CD4-positive, alpha-beta T cell (primary cell): ENCODE measurements at regions of chr16 and their contacts with region 1.

Region 1: GRCh38 chr16:2047330-2048115 is at the starts of genes NTHL1 and TSC2:
- DNase-seq: peak; percentile 78 to 96 (median 90)
- ATAC-seq: peak; percentile 90
- H3K4me3 ChIP-seq: peak within 1 kb of the TSS; percentile 96
- H3K4me3 Mint-ChIP-seq: peak within 1 kb of the TSS; percentile 93
- H3K27ac ChIP-seq: peak within 1 kb of the TSS in 1 of 2 donors; percentile 29
- H3K27ac Mint-ChIP-seq: peak within 1 kb of the TSS; percentile 56
- H3K4me1 ChIP-seq: peaks cover 33% of the 10 kb centered on the region
- H3K4me1 Mint-ChIP-seq: peaks cover 23% of the 10 kb centered on the region
- H3K27me3 ChIP-seq: no peaks in the 10 kb centered on the region
- H3K27me3 Mint-ChIP-seq: no peaks in the 10 kb centered on the region
- CTCF ChIP-seq: peak; percentile 57
- total RNA-seq, gene NTHL1: 2.7 to 2.9 TPM
- total RNA-seq, gene TSC2: 83.0 to 85.0 TPM

Region 2: DNA sequence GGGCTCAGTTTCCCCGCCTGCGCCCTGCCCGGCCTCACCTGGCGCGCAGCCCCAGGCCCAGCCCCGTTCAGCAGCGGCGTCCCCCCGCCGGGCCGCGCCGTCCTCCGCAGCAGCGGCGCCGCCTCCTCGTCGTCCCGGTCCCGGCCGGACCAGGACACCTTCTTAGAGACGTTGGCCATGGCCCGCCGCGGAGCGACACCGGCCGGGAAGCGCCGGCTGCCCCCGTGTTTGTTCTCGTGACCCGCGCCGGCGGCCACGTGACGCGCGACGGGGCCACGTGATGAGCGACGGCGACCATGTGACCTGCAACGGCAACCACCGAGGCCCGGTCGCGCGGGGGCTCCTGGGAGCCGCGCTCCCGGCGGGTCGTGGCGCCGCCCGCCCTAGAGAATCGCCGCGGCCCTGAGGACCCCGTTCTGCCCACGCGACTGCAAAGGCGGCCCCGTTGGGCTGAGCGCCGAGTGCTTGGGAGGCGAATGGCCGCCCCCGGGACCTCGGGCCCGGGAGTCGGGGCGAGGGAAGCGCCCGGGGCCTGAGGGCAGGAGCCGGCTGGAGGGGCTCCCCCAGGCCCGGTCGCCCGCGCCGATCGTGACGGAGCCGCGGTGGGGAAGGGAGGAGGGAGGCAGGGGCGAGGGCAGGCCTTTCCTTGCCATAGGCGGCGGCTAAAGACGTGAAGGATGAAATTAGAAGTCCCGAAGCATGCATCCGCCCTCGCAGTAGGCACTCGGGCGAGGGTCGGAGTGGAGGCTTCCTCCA is 572.5 kb before region 1 on chr16 and contains the start of gene CLCN7:
- CTCF ChIA-PET with region 1: no interaction called
- POLR2A ChIA-PET with region 1: no interaction called
- intact Hi-C with region 1: loop called in 1 of 2 experiments (anchors 10 kb)
- DNase-seq: peak; percentile 70 to 94 (median 84)
- ATAC-seq: peak; percentile 87
- H3K4me3 ChIP-seq: peak within 1 kb of the TSS; percentile 62
- H3K4me3 Mint-ChIP-seq: peak within 1 kb of the TSS; percentile 88
- H3K27ac ChIP-seq: peak within 1 kb of the TSS; percentile 72 to 84
- H3K27ac Mint-ChIP-seq: peak within 1 kb of the TSS; percentile 89
- H3K4me1 ChIP-seq: peaks cover 41% of the 10 kb centered on the region
- H3K4me1 Mint-ChIP-seq: peaks cover 43% of the 10 kb centered on the region
- H3K27me3 ChIP-seq: no peaks in the 10 kb centered on the region
- H3K27me3 Mint-ChIP-seq: no peaks in the 10 kb centered on the region
- CTCF ChIP-seq: no peak
- total RNA-seq, gene CLCN7: 70.5 to 76.2 TPM

Region 3: DNA sequence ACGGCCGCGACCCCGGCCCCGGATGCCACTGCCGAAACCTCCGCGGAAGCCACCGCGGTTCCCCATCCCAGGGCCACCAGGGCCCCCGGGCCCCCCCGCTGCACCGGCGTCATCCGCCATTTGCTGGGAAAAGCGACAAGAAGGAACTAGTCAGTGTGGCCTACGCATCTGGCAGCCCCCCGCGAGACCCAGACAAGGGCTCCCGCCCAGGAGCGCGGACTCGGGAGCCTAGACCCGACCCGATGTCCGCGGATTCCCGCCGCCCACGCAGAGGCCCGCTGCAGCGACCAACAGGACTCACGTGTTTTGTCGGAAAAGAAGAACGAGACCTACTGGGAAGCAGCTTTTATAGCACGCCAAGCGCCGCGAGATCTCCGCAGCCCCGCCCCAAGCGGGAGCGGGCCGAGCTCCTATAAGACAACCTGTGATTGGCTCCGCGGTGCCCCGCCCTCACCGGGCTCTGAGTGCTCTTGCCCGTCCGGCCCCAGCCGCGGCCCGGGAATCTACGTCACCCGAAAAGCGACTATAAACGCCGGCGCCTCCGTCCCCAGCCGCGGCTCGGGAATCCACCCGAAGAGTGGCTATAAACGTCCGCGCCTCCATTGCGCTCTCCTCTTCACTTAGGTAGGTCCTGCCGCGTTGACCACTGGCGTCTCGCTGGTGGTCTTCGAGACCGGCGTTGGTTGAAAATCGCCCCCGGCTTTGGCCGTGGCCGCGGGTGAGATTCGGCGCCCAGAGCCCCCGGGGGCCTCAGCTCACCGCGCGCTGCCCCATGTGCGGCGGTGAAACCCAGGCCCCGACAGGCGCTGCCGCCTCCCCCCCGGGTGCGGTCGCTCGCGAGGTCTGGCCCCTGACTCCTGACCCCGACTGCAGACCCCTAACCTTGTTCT is 82.8 kb before region 1 on chr16 and contains the start of gene RPS2:
- CTCF ChIA-PET with region 1: interaction called, 4 read pairs
- POLR2A ChIA-PET with region 1: interaction called, 11 read pairs
- intact Hi-C with region 1: loop called in 1 of 2 experiments (anchors 5 kb)
- DNase-seq: peak; percentile 96 to 100 (median 98)
- ATAC-seq: peak; percentile 89
- H3K4me3 ChIP-seq: peak within 1 kb of the TSS; percentile 91
- H3K4me3 Mint-ChIP-seq: peak within 1 kb of the TSS; percentile 98
- H3K27ac ChIP-seq: peak within 1 kb of the TSS; percentile 96 to 99
- H3K27ac Mint-ChIP-seq: peak within 1 kb of the TSS; percentile 98
- H3K4me1 ChIP-seq: peaks cover 58% of the 10 kb centered on the region
- H3K4me1 Mint-ChIP-seq: peaks cover 50% of the 10 kb centered on the region
- H3K27me3 ChIP-seq: no peaks in the 10 kb centered on the region
- H3K27me3 Mint-ChIP-seq: no peaks in the 10 kb centered on the region
- CTCF ChIP-seq: no peak
- total RNA-seq, gene RPS2: 3,604 to 3,755 TPM

Region 4: DNA sequence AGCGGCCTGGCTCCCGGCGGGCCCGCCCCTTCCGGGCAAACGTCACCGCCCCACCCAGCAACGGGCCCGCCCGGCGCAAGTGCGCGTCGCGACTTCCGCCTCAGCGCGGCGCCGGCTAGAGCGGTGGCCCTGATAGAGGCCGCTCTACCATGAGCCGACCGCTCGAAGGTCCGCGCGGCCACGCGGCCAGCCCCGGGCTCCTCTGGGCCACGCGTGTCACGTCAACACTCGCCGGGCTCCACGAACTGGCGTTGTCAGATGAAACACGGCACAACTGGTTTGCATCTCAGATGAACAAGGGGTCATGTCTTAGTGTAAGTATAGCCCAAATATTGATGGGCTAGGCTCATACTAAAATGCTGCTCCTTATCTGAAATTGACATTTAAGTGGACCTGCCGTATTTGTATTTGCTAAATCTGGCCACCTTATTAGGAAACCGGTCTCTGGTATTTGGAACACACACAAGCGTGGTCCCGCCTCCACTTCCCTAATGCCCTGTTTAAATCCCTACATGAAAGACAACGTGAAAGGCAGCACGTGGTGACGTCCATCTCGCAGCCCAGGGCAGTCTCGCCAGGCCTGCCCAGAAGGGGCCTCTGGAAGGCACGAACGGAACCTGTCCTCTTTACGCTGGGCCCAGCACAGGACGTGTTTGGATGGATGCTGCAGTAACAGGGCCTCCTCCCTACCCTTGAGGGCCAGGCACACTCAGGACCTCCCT is 37.6 kb before region 1 on chr16 and contains the start of gene ZNF598:
- CTCF ChIA-PET with region 1: interaction called, 3 read pairs
- POLR2A ChIA-PET with region 1: no interaction called
- intact Hi-C with region 1: loop called in 1 of 2 experiments (anchors 5 kb)
- DNase-seq: peak; percentile 47 to 93 (median 75)
- ATAC-seq: peak; percentile 91
- H3K4me3 ChIP-seq: peak within 1 kb of the TSS; percentile 68
- H3K4me3 Mint-ChIP-seq: peak within 1 kb of the TSS; percentile 93
- H3K27ac ChIP-seq: peak within 1 kb of the TSS; percentile 78 to 89
- H3K27ac Mint-ChIP-seq: peak within 1 kb of the TSS; percentile 92
- H3K4me1 ChIP-seq: peaks cover 52% of the 10 kb centered on the region
- H3K4me1 Mint-ChIP-seq: peaks cover 40% of the 10 kb centered on the region
- H3K27me3 ChIP-seq: no peaks in the 10 kb centered on the region
- H3K27me3 Mint-ChIP-seq: no peaks in the 10 kb centered on the region
- CTCF ChIP-seq: no peak
- total RNA-seq, gene ZNF598: 39.7 to 43.6 TPM

Region 5: GRCh38 chr16:2081201-2082084 is 33.9 kb after region 1 on chr16:
- CTCF ChIA-PET with region 1: no interaction called
- POLR2A ChIA-PET with region 1: no interaction called
- intact Hi-C with region 1: no loop called
- DNase-seq: no peak
- ATAC-seq: no peak
- H3K4me3 ChIP-seq: no peak overlapping the region
- H3K4me3 Mint-ChIP-seq: no peak overlapping the region
- H3K27ac ChIP-seq: no peak overlapping the region
- H3K27ac Mint-ChIP-seq: no peak overlapping the region
- H3K4me1 ChIP-seq: no peaks in the 10 kb centered on the region
- H3K4me1 Mint-ChIP-seq: no peaks in the 10 kb centered on the region
- H3K27me3 ChIP-seq: no peaks in the 10 kb centered on the region
- H3K27me3 Mint-ChIP-seq: no peaks in the 10 kb centered on the region
- CTCF ChIP-seq: no peak

Region 6: DNA sequence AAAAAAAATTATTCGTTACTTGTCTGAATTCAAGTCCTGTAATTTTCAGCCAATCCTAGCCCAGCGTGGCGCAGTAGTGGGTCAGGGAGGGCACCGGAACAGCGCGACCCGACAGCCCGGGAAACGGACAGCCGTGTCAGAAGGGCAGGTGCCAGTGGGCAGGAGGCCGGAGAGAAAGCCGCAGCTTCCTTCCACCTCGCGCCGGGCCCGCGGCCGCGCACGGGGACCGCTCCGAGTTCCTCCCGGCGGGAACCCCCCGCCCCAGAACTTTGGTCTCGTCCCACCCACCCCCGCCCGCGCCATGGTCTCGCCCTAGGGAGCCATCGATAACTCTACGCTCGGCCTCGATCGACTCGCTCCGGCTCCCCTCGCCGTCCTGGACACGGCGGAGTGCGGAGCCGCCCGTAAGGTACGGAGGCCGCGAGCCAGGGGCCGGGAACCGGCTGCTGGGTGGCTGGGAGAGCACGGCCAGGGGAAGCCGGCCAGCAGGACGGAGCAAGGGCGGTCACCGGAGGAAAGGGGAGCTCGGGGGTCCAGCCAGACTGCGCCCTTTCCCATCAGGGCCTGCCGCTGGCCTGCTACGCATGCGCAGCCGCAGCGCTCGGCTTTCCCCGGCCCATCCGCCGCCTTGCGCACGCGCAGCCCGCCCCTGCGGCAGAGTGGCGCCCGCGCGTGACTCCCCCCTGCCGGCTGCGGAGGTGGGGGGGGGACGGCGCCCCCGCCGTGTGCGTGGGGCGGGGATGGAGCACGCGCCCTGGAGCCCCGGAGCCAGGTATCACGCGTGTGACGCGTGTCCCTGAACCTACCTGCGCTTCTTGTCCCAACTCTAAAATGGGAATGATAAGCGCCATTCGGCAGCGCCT is 157.8 kb after region 1 on chr16 and contains the start of gene MLST8:
- CTCF ChIA-PET with region 1: no interaction called
- POLR2A ChIA-PET with region 1: no interaction called
- intact Hi-C with region 1: loop called in 1 of 2 experiments (anchors 5 kb)
- DNase-seq: peak; percentile 82 to 98 (median 92)
- ATAC-seq: peak; percentile 82
- H3K4me3 ChIP-seq: peak within 1 kb of the TSS; percentile 59
- H3K4me3 Mint-ChIP-seq: peak within 1 kb of the TSS; percentile 90
- H3K27ac ChIP-seq: peak within 1 kb of the TSS; percentile 90 to 94
- H3K27ac Mint-ChIP-seq: peak within 1 kb of the TSS; percentile 79
- H3K4me1 ChIP-seq: peaks cover 23% of the 10 kb centered on the region
- H3K4me1 Mint-ChIP-seq: peaks cover 13% of the 10 kb centered on the region
- H3K27me3 ChIP-seq: no peaks in the 10 kb centered on the region
- H3K27me3 Mint-ChIP-seq: no peaks in the 10 kb centered on the region
- CTCF ChIP-seq: peak; percentile 26
- total RNA-seq, gene MLST8: 22.9 to 26.4 TPM